GM10248 (cell line): ENCODE measurements at regions of chr2 and their contacts with region 1.

Region 1: DNA sequence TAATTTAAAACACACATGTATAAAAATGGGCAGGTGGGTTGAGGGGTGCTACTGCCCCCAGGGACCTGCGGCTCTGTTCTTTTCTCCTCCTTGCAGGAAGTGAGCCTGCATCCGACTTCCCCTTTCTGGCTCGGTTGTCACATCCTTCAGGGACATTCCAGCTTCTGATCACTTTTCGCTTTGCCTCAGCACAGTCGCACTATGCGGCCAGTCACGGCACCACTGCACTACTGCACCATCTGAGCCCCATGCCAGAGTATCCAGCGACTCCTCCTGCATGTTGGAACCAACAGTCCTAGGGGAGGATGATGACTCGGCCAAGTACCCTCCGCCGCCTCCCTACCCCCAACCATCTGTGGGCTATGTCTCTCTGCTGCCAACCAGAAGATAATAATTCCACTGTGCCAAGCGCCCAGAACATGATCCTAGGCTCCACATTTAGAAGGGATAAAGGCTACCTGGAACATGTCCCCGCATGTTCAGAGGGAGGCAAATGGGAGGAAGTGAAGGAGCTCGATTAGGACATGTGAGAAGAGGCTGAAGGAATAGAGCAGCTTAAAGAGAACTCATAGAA is 17.6 kb downstream of the CDC42EP3 start:
- DNase-seq: peak; percentile 45
- CTCF ChIP-seq: no peak

Region 2: DNA sequence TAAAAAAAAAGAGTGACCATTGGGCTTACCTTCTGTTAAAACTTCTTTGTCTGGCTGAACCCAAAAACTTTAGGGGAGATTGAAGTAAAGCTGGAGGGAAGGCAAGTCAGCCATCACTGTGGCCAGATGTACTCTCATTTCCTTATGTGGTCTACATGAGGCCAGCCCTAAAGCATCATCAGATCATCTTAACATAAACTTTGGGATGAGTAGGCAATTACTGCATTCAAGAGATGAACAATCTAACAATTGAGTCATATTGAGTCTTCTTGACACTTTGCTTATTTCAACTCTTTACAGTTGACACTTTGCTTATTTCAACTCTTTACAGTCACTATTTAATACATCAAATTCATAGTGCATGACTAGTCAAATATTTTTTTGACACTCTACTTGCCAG is 153.9 kb before region 1 on chr2:
- CTCF ChIA-PET with region 1: no interaction called
- POLR2A ChIA-PET with region 1: no interaction called
- DNase-seq: no peak
- CTCF ChIP-seq: no peak

Region 3: GRCh38 chr2:37665604-37666362 is 11.9 kb after region 1 on chr2:
- CTCF ChIA-PET with region 1: interaction called, 18 read pairs
- POLR2A ChIA-PET with region 1: interaction called, 7 read pairs
- DNase-seq: no peak
- CTCF ChIP-seq: no peak

Region 4: DNA sequence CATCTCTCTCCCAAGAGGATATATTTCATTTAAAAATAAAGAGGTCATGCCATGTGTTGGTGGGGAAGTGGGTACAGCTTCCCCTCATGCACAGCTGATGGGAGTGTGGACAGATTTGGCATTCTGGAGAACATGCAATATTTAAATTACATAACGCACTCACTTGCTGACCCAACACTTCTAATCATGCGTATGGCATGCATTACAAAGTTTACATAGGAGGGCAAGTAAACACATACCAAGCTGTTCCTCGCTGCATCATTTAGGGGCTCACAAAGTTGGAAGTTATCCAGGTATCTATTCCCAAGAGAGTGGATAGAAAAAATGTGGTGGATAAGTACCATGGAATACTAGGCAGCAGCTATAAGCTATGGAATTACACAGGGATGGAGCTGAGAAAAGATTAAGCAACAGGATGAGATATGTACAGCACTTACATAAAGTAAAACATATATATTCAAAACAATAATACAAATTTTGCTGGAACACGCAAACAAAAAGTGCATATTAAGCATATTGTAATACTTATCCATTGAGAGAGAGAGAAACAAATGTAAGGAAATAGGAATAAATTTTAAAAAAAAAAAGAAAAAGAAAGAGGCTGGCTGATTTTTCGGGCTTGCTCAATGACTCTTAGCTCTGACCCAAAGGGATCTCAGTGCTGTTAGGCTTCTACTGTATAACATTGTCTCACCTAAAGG is 411.1 kb after region 1 on chr2:
- CTCF ChIA-PET with region 1: no interaction called
- POLR2A ChIA-PET with region 1: no interaction called
- DNase-seq: no peak
- CTCF ChIP-seq: no peak